ENCODE measurements at regions of chr14 and their contacts with region 1.

Region 1: DNA sequence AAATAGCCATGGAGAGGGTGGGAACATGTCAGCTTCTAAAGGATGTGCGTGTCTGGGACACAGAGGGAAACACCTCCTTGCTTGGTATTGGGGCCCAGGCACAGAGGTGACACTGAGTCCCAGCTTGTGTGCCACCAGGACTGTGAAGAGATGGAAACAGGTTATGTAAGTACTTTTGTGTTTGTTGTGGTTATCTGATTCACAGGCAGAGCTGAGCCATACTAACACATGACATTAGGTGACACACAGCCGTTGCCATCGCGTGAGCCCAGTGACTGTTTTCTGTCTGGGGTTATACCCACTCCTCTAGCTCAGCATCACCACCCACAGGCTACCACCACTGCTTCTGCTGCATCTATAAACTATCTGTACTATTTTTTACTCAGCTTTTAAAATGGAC is 12.1 kb upstream of the FLVCR2 start:
- DNase-seq: peak; percentile 36 to 61
- H3K4me3 ChIP-seq: no peak overlapping the region
- H3K27ac ChIP-seq: peak overlapping the region in 1 of 2 donors; percentile 7
- H3K4me1 ChIP-seq: no peaks in the 10 kb centered on the region
- H3K27me3 ChIP-seq: no peaks in the 10 kb centered on the region
- CTCF ChIP-seq: no peak
- POLR2A ChIP-seq: no peak

Region 2: GRCh38 chr14:74133833-74134481 is 1432.4 kb before region 1 on chr14:
- intact Hi-C with region 1: loop called (anchors 5 kb)
- DNase-seq: no peak
- H3K4me3 ChIP-seq: no peak overlapping the region
- H3K27ac ChIP-seq: no peak overlapping the region
- H3K4me1 ChIP-seq: no peaks in the 10 kb centered on the region
- H3K27me3 ChIP-seq: no peaks in the 10 kb centered on the region
- CTCF ChIP-seq: no peak
- POLR2A ChIP-seq: no peak

Measured in breast epithelium (tissue), 4 donors.